ENCODE measurements at regions of chr19 and their contacts with region 1.

Region 1: DNA sequence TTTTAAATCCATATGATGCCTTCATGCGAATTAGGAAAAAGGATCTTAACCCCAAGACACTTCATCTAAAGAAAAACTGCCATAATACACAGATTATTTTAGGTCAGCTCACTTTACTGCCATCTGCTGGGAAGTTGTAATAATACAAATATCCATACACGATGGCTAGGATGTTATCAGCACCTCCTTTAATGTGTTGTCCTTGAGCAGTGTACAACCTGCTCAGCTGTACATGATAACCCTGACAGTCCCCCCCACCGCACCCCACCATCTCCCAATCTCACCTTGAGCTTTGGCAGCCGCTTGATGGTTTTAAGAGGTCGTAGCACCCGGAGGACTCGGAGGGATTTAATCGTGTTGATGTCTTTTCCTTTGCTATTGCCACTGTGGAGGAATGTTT is 112.2 kb downstream of the IER2 start:
- DNase-seq: peak; percentile 70
- H3K4me3 ChIP-seq: no peak overlapping the region
- H3K27ac ChIP-seq: no peak overlapping the region
- H3K4me1 ChIP-seq: peaks cover 10% of the 10 kb centered on the region
- H3K27me3 ChIP-seq: peaks cover 0 to 2% of the 10 kb centered on the region in 2 experiments
- CTCF ChIP-seq: peak; percentile 32 to 46
- POLR2A ChIP-seq: no peak

Region 2: DNA sequence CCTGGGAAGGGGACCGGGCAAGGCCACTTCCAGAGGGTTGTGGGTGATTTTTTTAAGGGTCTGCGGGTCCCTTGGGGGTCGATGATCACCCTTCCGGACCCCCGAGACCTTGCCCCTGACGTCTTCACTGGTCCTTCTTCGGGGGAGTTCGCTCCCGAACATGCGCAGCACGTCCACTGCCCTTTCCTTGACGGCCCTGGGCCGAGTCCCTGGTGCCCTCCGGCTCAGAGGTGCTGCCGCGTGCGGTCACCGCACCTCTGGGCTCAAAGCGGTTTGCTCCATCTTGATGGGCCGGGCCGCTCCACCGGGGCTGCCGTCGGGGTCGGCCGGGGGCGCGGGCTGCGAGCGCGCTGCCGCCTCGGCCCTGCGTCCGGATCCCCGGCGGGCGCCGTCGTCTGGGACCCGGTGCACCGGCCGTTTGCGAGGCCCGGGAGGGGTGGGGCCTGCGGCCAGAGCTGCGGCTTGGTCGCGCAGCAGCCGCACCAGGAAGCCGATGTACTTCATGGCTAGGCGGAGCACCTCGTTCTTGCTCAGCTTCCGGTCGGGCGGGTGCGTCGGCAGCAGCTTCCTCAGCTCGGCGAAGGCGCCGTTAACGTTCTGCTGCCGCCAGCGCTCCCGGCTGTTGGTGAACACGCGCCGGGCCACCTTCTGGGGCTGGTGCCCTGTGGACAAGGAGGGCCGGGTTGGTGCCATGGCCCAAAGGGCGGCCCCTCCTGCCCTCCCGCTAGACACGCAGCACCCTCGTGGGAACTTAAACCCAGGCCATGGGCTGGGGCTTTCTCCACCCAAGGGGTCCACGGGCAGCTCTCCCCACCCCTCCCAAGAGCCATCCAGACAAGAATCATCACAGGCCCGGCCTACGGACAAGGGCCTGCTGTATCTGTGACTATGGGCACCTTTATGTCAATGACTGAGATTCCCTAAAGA is 163.1 kb before region 1 on chr19:
- CTCF ChIA-PET with region 1: interaction called, 26 read pairs
- POLR2A ChIA-PET with region 1: no interaction called
- dilution Hi-C with region 1: no loop called
- intact Hi-C with region 1: loop called (anchors 1 kb)
- DNase-seq: peak; percentile 79
- H3K4me3 ChIP-seq: peak overlapping the region in 2 of 3 experiments; percentile 10 to 17
- H3K27ac ChIP-seq: peak overlapping the region; percentile 89
- H3K4me1 ChIP-seq: peaks cover 54% of the 10 kb centered on the region
- H3K27me3 ChIP-seq: no peaks in the 10 kb centered on the region
- CTCF ChIP-seq: no peak
- POLR2A ChIP-seq: peak; percentile 84

Region 3: GRCh38 chr19:13117772-13118423 is 144.6 kb before region 1 on chr19 and contains the start of gene NACC1:
- CTCF ChIA-PET with region 1: interaction called, 4 read pairs
- POLR2A ChIA-PET with region 1: no interaction called
- dilution Hi-C with region 1: no loop called
- intact Hi-C with region 1: loop called (anchors 1 kb)
- DNase-seq: peak; percentile 87
- H3K4me3 ChIP-seq: peak within 1 kb of the TSS; percentile 64 to 99 (median 81)
- H3K27ac ChIP-seq: peak within 1 kb of the TSS; percentile 57
- H3K4me1 ChIP-seq: peaks cover 13% of the 10 kb centered on the region
- H3K27me3 ChIP-seq: no peaks in the 10 kb centered on the region
- CTCF ChIP-seq: no peak
- POLR2A ChIP-seq: no peak
- total RNA-seq, gene NACC1: 95.4 and 97.6 TPM in 2 replicates

Region 4: GRCh38 chr19:13195678-13196077 is 66.8 kb before region 1 on chr19:
- CTCF ChIA-PET with region 1: interaction called, 26 read pairs
- POLR2A ChIA-PET with region 1: no interaction called
- dilution Hi-C with region 1: no loop called
- intact Hi-C with region 1: loop called (anchors 1 kb)
- DNase-seq: no peak
- H3K4me3 ChIP-seq: no peak overlapping the region
- H3K27ac ChIP-seq: no peak overlapping the region
- H3K4me1 ChIP-seq: no peaks in the 10 kb centered on the region
- H3K27me3 ChIP-seq: no peaks in the 10 kb centered on the region
- CTCF ChIP-seq: no peak
- POLR2A ChIP-seq: no peak

Region 5: GRCh38 chr19:13212759-13213330 is 49.6 kb before region 1 on chr19:
- CTCF ChIA-PET with region 1: interaction called, 15 read pairs
- POLR2A ChIA-PET with region 1: interaction called, 5 read pairs
- dilution Hi-C with region 1: no loop called
- intact Hi-C with region 1: loop called (anchors 2 kb)
- DNase-seq: peak; percentile 39
- H3K4me3 ChIP-seq: no peak overlapping the region
- H3K27ac ChIP-seq: no peak overlapping the region
- H3K4me1 ChIP-seq: no peaks in the 10 kb centered on the region
- H3K27me3 ChIP-seq: no peaks in the 10 kb centered on the region
- CTCF ChIP-seq: peak; percentile 65 to 74
- POLR2A ChIP-seq: no peak

Region 6: GRCh38 chr19:13225085-13225484 is 37.4 kb before region 1 on chr19:
- CTCF ChIA-PET with region 1: no interaction called
- POLR2A ChIA-PET with region 1: no interaction called
- dilution Hi-C with region 1: no loop called
- intact Hi-C with region 1: no loop called
- DNase-seq: no peak
- H3K4me3 ChIP-seq: no peak overlapping the region
- H3K27ac ChIP-seq: no peak overlapping the region
- H3K4me1 ChIP-seq: no peaks in the 10 kb centered on the region
- H3K27me3 ChIP-seq: no peaks in the 10 kb centered on the region
- CTCF ChIP-seq: no peak
- POLR2A ChIP-seq: no peak

Region 7: GRCh38 chr19:13244920-13245319 is 17.5 kb before region 1 on chr19:
- CTCF ChIA-PET with region 1: interaction called, 20 read pairs
- POLR2A ChIA-PET with region 1: no interaction called
- dilution Hi-C with region 1: no loop called
- intact Hi-C with region 1: no loop called
- DNase-seq: no peak
- H3K4me3 ChIP-seq: no peak overlapping the region
- H3K27ac ChIP-seq: no peak overlapping the region
- H3K4me1 ChIP-seq: peaks cover 3% of the 10 kb centered on the region
- H3K27me3 ChIP-seq: no peaks in the 10 kb centered on the region
- CTCF ChIP-seq: no peak
- POLR2A ChIP-seq: no peak

Region 8: DNA sequence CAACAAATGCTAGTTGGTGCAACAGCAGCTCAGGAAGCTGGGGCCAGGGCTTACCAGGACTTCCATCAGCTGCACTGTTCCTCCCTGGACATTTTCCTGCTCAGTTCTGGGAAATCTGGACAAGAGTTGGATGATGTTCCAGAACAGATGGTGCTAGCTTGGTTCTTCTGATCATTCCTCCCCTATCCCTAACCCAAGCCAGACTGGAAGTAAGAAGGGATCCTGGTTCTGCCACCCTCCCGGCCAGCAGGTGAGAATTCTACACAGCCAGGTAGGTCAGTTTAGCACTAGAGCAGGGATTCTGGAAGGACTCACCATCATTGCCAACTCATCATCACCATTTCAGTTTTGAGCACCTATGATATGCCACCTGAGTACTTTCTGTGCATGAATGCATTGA is 213.6 kb after region 1 on chr19:
- CTCF ChIA-PET with region 1: no interaction called
- POLR2A ChIA-PET with region 1: no interaction called
- dilution Hi-C with region 1: no loop called
- intact Hi-C with region 1: no loop called
- DNase-seq: no peak
- H3K4me3 ChIP-seq: no peak overlapping the region
- H3K27ac ChIP-seq: no peak overlapping the region
- H3K4me1 ChIP-seq: no peaks in the 10 kb centered on the region
- H3K27me3 ChIP-seq: no peaks in the 10 kb centered on the region
- CTCF ChIP-seq: no peak
- POLR2A ChIP-seq: no peak